Activated CD4-positive, alpha-beta T cell treated with anti-CD3 and anti-CD28 coated beads for 36 hours (primary cell): ENCODE measurements at regions of chr7 and their contacts with region 1.

Region 1: DNA sequence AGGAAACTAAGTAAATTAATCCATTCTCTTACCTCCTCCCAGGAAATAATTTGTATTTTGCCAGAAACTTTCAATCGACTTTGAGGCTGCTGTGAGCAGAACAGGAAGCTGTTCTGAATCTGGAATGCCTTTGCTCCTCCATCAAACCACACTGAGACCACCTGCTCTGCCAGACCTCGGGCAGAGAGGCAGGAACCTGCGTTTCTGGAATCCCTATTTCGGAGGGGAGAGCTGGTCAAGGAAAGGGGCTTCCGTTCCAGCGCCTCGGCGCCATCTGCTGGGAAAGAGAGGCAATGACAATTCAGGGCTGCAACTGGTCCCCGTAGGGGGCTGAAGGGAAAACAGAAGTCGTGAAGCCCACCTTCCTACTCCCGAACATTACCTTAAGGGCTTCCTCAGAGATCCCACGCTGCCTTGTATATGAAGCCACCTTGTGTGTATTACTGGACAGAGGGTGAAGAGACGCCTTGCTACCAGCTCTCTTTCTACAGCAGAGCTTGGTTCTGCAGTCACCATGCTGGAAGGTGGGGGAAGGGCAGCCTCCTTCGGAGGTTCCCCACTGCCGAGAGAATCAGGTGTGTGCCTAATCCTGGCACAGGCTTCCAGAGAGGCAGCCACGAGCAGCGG is 31.2 kb downstream of the ZNF467 start:
- DNase-seq: peak; percentile 79
- ATAC-seq: peak; percentile 88
- H3K4me3 Mint-ChIP-seq: peak overlapping the region; percentile 65
- H3K27ac Mint-ChIP-seq: no peak overlapping the region
- H3K4me1 Mint-ChIP-seq: peaks cover 10% of the 10 kb centered on the region
- H3K27me3 Mint-ChIP-seq: peaks cover 23% of the 10 kb centered on the region

Region 2: GRCh38 chr7:149669121-149669818 is 72.9 kb before region 1 on chr7:
- CTCF ChIA-PET with region 1: interaction called, 74 read pairs
- POLR2A ChIA-PET with region 1: no interaction called
- intact Hi-C with region 1: loop called in 1 of 2 experiments (anchors 1 kb)
- DNase-seq: peak; percentile 36
- ATAC-seq: no peak
- H3K4me3 Mint-ChIP-seq: no peak overlapping the region
- H3K27ac Mint-ChIP-seq: no peak overlapping the region
- H3K4me1 Mint-ChIP-seq: peaks cover 2% of the 10 kb centered on the region
- H3K27me3 Mint-ChIP-seq: peaks cover 35% of the 10 kb centered on the region

Region 3: GRCh38 chr7:149690688-149691446 is 51.3 kb before region 1 on chr7:
- CTCF ChIA-PET with region 1: interaction called, 10 read pairs
- POLR2A ChIA-PET with region 1: no interaction called
- intact Hi-C with region 1: no loop called
- DNase-seq: peak; percentile 41
- ATAC-seq: peak; percentile 26
- H3K4me3 Mint-ChIP-seq: no peak overlapping the region
- H3K27ac Mint-ChIP-seq: no peak overlapping the region
- H3K4me1 Mint-ChIP-seq: no peaks in the 10 kb centered on the region
- H3K27me3 Mint-ChIP-seq: peaks cover 50% of the 10 kb centered on the region

Region 4: GRCh38 chr7:150799741-150800580 is 1057.8 kb after region 1 on chr7 and contains the start of gene TMEM176B:
- CTCF ChIA-PET with region 1: no interaction called
- POLR2A ChIA-PET with region 1: no interaction called
- intact Hi-C with region 1: no loop called
- DNase-seq: no peak
- ATAC-seq: peak; percentile 19
- H3K4me3 Mint-ChIP-seq: peak within 1 kb of the TSS; percentile 29
- H3K27ac Mint-ChIP-seq: no peak within 1 kb of the TSS
- H3K4me1 Mint-ChIP-seq: peaks cover 2% of the 10 kb centered on the region
- H3K27me3 Mint-ChIP-seq: peaks cover 37% of the 10 kb centered on the region
- total RNA-seq, gene TMEM176B: not detected